ENCODE measurements at regions of chr17 and their contacts with region 1.

Region 1: DNA sequence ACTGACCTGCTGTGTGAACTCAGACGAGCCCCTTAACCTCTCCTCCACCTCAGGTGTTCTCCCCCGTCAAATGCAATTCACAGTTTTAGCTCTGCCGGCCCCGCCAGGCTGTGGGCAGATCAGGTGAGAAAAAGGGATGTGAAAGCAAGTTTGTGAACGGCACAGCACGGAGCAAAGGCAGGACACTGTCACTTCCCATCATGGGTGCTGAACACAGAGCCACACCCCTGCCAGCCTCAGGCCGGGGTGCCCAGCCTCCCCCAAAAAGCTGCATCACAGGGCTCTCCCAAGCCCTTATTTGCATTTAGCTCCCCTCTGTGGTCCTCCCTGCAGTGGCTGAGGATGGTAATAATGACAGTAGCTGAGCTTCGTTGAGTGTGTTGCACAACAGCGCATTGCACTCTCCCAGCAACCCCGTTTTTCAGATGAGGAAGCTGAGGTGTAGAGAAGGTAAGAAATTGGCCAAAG is 88.8 kb upstream of the TNRC6C start:
- DNase-seq: peak; percentile 97
- H3K4me3 ChIP-seq: peak overlapping the region; percentile 61
- H3K27ac ChIP-seq: peak overlapping the region; percentile 86
- H3K4me1 ChIP-seq: peaks cover 83% of the 10 kb centered on the region
- CTCF ChIP-seq: no peak

Region 2: GRCh38 chr17:77319211-77320043 is 550.3 kb before region 1 on chr17:
- CTCF ChIA-PET with region 1: no interaction called
- POLR2A ChIA-PET with region 1: no interaction called
- intact Hi-C with region 1: loop called (anchors 10 kb)
- DNase-seq: peak; percentile 57
- H3K4me3 ChIP-seq: no peak overlapping the region
- H3K27ac ChIP-seq: peak overlapping the region; percentile 25
- H3K4me1 ChIP-seq: peaks cover 76% of the 10 kb centered on the region
- CTCF ChIP-seq: no peak

Region 3: DNA sequence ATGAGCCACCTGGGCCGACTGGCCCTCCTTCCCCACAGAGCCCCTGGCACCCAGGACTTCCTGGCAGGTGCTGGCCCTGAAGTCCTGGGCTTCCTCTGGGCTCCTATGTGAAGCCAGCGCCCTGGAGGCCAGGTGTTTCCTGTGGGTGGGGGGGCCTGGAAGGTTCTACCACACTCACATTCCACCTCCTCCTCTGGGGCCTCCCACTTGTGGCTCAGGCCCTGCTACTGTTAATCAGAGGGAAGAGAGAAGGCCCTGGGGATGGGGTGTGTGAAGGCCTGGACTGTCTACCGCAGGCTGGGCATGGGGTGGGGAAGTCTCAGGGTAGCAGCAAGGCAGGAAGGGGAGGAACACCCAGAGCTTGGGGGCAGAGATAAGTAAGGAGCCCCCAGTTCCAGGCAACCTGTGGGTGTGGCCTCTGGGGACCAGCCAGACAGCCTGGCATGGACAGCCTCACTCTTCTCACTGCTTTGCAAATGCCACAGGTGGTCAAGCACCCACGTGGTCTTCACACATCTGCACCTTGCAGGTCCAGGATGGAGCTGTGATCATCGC is 23.1 kb before region 1 on chr17:
- CTCF ChIA-PET with region 1: no interaction called
- POLR2A ChIA-PET with region 1: interaction called, 7 read pairs
- intact Hi-C with region 1: loop called (anchors 1 kb)
- DNase-seq: peak; percentile 85
- H3K4me3 ChIP-seq: no peak overlapping the region
- H3K27ac ChIP-seq: peak overlapping the region; percentile 16
- H3K4me1 ChIP-seq: peaks cover 48% of the 10 kb centered on the region
- CTCF ChIP-seq: no peak

Region 4: DNA sequence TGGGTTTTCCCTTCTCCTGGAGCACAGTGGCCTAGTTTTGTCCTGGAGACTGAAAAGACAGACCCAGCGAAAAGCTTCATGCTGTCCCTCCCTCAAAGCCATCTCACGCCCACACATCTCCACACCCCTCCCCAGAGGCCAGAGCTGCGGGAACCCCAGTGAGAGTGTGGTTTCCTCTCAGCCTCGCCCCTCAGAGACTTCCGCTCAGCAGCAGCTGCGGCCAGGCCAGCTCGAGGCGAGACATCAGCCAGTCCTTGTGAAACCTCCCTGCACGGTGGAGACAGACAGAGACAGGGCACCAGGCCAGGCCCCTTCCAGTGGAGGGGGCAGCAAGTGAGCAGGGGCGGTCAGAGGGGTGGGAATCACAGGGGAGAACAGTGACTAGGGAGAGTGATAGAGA is 11.8 kb after region 1 on chr17:
- CTCF ChIA-PET with region 1: interaction called, 4 read pairs
- POLR2A ChIA-PET with region 1: interaction called, 38 read pairs
- intact Hi-C with region 1: loop called (anchors 1 kb)
- DNase-seq: peak; percentile 95
- H3K4me3 ChIP-seq: peak overlapping the region; percentile 49
- H3K27ac ChIP-seq: peak overlapping the region; percentile 59
- H3K4me1 ChIP-seq: peaks cover 53% of the 10 kb centered on the region
- CTCF ChIP-seq: no peak

Region 5: DNA sequence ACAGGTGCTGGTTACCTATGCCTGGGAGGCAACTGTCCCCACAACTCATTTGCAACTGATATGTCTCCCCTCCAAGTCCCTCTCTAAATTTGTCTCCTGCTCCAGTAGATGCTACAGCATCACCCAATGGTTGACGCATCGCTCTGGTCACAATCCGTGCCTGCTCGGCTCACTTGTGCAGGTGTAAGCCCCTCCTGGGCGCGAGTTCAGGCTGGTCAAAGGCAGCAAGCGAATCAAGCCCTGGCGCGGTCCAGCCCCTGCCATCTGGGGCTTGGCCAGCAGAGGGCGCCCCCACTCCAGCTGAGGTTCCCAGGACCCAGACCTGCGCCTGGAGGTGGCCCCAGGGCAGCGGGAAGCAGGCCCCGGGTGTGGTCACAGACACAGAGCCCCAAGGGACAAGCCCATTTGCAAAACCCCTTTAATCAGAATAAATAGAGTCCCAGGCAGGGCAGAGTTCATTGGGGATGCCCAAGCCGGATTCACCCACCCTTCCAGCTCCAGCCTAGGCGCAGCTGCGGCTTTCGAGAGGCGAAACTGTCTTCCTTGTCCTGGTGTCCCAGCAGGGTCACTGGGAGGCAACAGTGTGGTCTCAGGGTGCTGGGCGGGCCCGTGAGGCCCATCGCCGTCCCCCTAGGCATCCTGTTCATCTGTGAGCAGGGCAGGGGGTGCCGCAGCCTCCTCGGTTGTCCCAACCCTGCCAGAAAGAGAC is 243.0 kb after region 1 on chr17:
- CTCF ChIA-PET with region 1: no interaction called
- POLR2A ChIA-PET with region 1: no interaction called
- intact Hi-C with region 1: no loop called
- DNase-seq: peak; percentile 75
- H3K4me3 ChIP-seq: no peak overlapping the region
- H3K27ac ChIP-seq: no peak overlapping the region
- H3K4me1 ChIP-seq: no peaks in the 10 kb centered on the region
- CTCF ChIP-seq: peak; percentile 100